ENCODE measurements at regions of chr7 and their contacts with region 1.

Region 1: DNA sequence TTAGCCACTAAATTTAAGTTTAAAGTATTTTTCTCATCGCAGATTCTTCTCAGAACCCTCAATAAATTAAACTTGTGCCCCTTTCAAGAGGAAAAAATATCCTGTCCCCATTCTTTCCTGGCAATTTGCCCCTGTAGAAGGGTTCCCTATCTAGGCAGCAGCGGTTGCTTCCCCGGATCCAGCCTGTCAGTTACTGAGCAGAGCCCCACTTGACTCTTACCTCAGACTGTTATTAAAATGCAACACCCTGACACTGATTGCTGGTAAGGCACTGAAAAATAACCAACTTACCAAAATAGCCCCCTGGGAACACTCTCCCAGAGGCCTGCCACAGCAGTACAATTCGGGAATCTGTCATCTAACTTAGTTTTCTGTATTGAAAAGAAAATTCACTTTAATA is 13.9 kb downstream of the LMTK2 start:
- H3K4me3 Mint-ChIP-seq: no peak overlapping the region
- H3K27ac Mint-ChIP-seq: no peak overlapping the region
- H3K4me1 Mint-ChIP-seq: peaks cover 38% of the 10 kb centered on the region
- H3K27me3 Mint-ChIP-seq: peaks cover 89% of the 10 kb centered on the region

Region 2: DNA sequence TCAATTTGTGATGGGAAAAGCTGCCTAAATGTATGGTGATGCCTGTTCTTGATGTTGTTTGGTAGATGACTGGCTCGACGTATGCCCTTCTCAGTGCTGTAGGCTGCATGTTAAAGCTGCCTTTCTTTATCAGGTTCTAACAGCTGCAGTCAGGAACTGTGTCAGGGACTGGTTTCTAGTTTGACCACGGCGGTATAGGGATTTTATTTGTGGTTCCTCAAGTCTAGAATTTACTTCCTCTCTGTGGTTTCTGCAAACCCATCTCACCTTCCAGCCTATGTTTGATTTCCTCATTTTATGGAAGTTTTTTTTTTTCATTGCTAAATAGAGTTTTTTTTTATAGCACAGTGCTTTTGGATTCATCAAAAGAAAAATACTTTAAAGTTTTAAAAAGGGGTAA is 12.6 kb after region 1 on chr7:
- intact Hi-C with region 1: no loop called
- H3K4me3 Mint-ChIP-seq: no peak overlapping the region
- H3K27ac Mint-ChIP-seq: peak overlapping the region; percentile 50
- H3K4me1 Mint-ChIP-seq: peaks cover 79% of the 10 kb centered on the region
- H3K27me3 Mint-ChIP-seq: peaks cover 55% of the 10 kb centered on the region

Region 3: GRCh38 chr7:98194672-98195457 is 74.3 kb after region 1 on chr7:
- intact Hi-C with region 1: no loop called
- H3K4me3 Mint-ChIP-seq: no peak overlapping the region
- H3K27ac Mint-ChIP-seq: no peak overlapping the region
- H3K4me1 Mint-ChIP-seq: peaks cover 13% of the 10 kb centered on the region
- H3K27me3 Mint-ChIP-seq: peaks cover 7% of the 10 kb centered on the region

Region 4: DNA sequence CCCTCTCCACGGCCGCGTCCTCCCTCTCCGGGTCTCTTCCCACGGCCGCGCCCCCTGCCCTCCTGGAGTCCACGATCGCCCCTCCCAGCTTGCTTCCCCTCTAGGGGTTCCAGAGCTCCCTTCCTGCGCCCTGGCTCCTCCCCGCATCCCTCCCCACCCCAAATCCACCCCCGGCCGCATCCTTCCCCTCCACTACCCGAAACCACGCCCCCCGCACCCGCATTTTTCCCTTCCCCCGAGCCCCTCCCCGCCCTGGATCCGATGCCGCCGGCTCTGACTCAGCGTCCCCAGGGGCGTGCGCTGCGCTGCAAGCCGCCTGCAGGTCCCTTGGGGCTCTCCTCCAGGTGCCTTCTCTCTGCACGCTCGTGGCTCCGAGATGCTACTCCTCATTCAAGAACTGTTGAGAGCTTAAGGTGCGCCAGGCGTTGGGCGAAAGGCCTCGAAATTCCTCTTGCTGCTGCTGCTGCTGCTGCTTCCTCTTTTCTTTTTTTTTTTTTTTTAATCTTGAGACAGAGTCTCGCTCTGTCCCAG is 749.6 kb after region 1 on chr7:
- intact Hi-C with region 1: loop called (anchors 5 kb)
- H3K4me3 Mint-ChIP-seq: peak overlapping the region; percentile 79
- H3K27ac Mint-ChIP-seq: peak overlapping the region; percentile 78
- H3K4me1 Mint-ChIP-seq: peaks cover 14% of the 10 kb centered on the region
- H3K27me3 Mint-ChIP-seq: peaks cover 64% of the 10 kb centered on the region

Measured in dendritic cell treated with granulocyte-macrophage colony-stimulating factor and Interleukin-4, amounts not matched to agents 40 ng/mL and 50 ng/mL, for 4 days (primary cell).